CD8-positive, alpha-beta memory T cell (primary cell): ENCODE measurements at regions of chr17 and their contacts with region 1.

Region 1: DNA sequence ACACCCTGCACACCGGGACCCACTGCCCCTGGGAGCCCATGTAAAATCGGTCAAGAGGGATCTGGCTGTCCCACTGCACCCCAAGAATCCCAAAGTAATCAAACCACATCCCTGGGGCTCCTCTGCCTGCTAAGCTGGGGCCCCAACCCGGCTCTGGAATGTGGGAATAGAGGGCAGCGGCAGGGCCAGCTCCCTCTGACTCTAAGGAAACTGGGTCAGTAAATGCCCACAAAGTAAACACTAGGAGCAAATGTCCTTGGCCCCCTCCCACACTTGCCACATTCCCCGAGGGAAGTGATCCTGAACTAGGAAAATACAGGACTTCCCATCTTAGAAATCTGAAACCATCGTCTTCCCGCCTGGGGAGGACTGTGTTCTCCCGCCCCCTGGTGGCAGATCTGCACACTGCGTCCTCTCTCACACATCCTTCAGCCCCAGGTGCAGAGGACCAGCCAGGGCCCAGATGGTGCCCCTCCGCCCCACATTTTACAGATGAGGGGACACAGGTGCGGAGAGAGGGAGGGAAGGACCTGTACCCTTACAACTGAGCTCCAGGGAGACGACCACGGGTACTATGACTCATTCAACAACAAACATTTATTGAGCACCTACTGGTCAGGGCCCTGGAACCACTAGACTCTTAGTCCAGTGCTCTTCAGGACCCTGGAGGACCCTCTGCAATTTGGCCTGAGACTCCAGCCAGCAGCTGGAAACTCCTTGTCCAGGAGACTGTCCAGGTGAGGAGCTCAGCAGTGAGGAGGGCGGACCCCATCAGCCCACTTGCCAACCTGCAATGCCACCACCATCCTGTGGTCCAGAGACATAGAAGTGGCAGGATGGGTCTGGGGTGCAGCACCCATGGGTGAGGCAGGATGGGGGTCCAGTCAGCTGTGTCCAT is 10.1 kb downstream of the P3H4 start:
- DNase-seq: peak; percentile 52 to 76 (median 61)
- H3K4me3 ChIP-seq: no peak overlapping the region
- H3K4me3 Mint-ChIP-seq: no peak overlapping the region
- H3K27ac ChIP-seq: no peak overlapping the region
- H3K27ac Mint-ChIP-seq: peak overlapping the region in 5 of 8 donors; percentile 25 to 42 (median 35)
- H3K4me1 ChIP-seq: no peaks in the 10 kb centered on the region
- H3K4me1 Mint-ChIP-seq: peaks cover 4 to 6% (median 5%) of the 10 kb centered on the region in 3 donors
- H3K27me3 ChIP-seq: no peaks in the 10 kb centered on the region
- H3K27me3 Mint-ChIP-seq: peaks cover 6 to 8% of the 10 kb centered on the region in 2 donors

Region 2: GRCh38 chr17:41688699-41689496 is 112.7 kb before region 1 on chr17 and contains the start of gene EIF1:
- CTCF ChIA-PET with region 1: no interaction called
- POLR2A ChIA-PET with region 1: no interaction called
- DNase-seq: peak; percentile 99 to 100 (median 99)
- H3K4me3 ChIP-seq: peak within 1 kb of the TSS; percentile 94
- H3K4me3 Mint-ChIP-seq: peak within 1 kb of the TSS; percentile 96 to 100 (median 98)
- H3K27ac ChIP-seq: peak within 1 kb of the TSS; percentile 100
- H3K27ac Mint-ChIP-seq: peak within 1 kb of the TSS; percentile 99 to 100 (median 99)
- H3K4me1 ChIP-seq: peaks cover 31% of the 10 kb centered on the region
- H3K4me1 Mint-ChIP-seq: peaks cover 34 to 47% (median 39%) of the 10 kb centered on the region in 3 donors
- H3K27me3 ChIP-seq: no peaks in the 10 kb centered on the region
- H3K27me3 Mint-ChIP-seq: peaks cover 0 to 15% of the 10 kb centered on the region in 2 donors
- total RNA-seq, gene EIF1: 1,446 to 1,504 TPM

Region 3: GRCh38 chr17:41738077-41738735 is 63.4 kb before region 1 on chr17:
- CTCF ChIA-PET with region 1: interaction called, 12 read pairs
- POLR2A ChIA-PET with region 1: no interaction called
- DNase-seq: peak; percentile 64 to 81 (median 68)
- H3K4me3 ChIP-seq: no peak overlapping the region
- H3K4me3 Mint-ChIP-seq: no peak overlapping the region
- H3K27ac ChIP-seq: no peak overlapping the region
- H3K27ac Mint-ChIP-seq: no peak overlapping the region
- H3K4me1 ChIP-seq: no peaks in the 10 kb centered on the region
- H3K4me1 Mint-ChIP-seq: peaks cover 0 to 14% (median 2%) of the 10 kb centered on the region in 3 donors
- H3K27me3 ChIP-seq: peaks cover 16% of the 10 kb centered on the region
- H3K27me3 Mint-ChIP-seq: peaks cover 25 to 35% of the 10 kb centered on the region in 2 donors

Region 4: DNA sequence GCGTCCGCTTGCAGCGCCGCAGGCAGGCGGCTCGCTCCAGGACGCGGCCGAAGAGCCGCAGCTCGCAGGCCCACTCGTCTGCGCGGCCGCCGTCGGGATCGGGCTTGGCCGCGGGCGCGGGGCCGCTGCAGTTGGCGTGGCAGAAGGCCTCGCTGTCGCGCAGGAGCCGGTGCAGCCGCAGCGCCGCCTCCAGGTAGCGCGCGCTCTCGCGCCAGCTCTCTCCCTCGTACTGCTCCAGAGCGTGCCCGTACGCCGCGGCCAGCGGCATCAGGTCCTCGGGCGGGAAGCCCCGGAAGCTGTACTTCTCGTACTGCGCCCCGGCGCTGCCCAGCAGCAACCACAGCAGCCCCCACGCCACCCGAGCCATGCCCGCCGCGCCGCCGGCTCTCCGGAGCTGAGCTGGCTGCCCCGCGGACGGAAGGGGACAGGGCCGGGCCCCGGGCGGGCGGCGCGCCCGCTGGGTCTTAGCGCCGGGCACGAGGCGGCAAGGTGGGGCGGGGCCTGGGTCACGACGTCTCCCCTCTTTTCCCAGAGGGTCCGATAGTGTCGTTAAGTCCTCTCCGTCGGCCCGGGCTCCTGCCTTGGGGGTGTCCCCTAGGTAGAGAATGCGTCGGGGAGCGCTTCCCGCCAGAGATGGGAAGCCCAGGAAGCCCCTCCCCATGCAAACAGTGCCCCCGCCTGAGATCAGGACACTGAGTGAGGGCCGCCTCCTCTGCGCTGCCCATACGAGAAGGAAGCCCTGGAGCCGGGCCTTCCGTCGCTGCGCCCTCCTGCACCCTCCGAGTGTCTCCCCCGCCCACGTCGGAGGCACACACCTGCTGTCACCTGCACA is 10.1 kb after region 1 on chr17 and contains the start of gene P3H4:
- CTCF ChIA-PET with region 1: interaction called, 15 read pairs
- POLR2A ChIA-PET with region 1: interaction called, 3 read pairs
- DNase-seq: peak; percentile 58 to 82 (median 78)
- H3K4me3 ChIP-seq: peak within 1 kb of the TSS; percentile 65
- H3K4me3 Mint-ChIP-seq: peak within 1 kb of the TSS; percentile 93 to 96 (median 94)
- H3K27ac ChIP-seq: peak within 1 kb of the TSS; percentile 24
- H3K27ac Mint-ChIP-seq: peak within 1 kb of the TSS; percentile 31 to 88 (median 84)
- H3K4me1 ChIP-seq: peaks cover 28% of the 10 kb centered on the region
- H3K4me1 Mint-ChIP-seq: peaks cover 25 to 34% (median 25%) of the 10 kb centered on the region in 3 donors
- H3K27me3 ChIP-seq: no peaks in the 10 kb centered on the region
- H3K27me3 Mint-ChIP-seq: peaks cover 0 to 8% of the 10 kb centered on the region in 2 donors
- total RNA-seq, gene P3H4: 2.6 to 3.7 TPM

Region 5: DNA sequence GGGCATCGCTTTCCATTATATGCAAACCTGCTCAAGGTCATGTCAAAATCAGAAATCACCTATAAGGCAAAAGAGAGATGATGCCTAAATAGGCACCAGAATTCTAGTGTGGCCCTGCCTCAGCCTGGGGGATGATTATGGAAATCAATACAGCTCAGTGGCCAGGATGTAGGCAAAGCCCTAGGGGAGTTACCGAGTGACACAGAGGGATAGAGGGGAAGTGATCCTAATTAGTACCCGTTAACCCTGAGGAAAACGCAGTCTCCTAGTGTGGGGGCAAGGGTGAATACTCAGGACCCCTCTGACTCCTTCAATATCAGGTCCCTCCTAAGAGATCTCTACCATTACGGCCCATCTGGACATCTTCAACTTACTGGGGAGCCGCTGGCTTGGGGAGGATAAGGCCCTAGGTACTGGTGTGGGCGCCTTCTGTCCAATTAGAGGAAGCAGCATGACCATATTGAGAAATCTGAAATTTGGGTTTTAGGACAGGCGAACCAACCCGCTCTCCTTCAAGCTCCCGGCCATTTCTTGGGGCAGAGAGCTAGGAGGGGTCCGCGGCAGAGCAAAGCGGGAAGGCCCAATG is 33.7 kb after region 1 on chr17:
- CTCF ChIA-PET with region 1: no interaction called
- POLR2A ChIA-PET with region 1: no interaction called
- DNase-seq: no peak
- H3K4me3 ChIP-seq: peak overlapping the region; percentile 52
- H3K4me3 Mint-ChIP-seq: peak overlapping the region; percentile 85 to 92 (median 87)
- H3K27ac ChIP-seq: no peak overlapping the region
- H3K27ac Mint-ChIP-seq: peak overlapping the region in 7 of 8 donors; percentile 21 to 86 (median 64)
- H3K4me1 ChIP-seq: peaks cover 17% of the 10 kb centered on the region
- H3K4me1 Mint-ChIP-seq: peaks cover 11 to 23% (median 13%) of the 10 kb centered on the region in 3 donors
- H3K27me3 ChIP-seq: no peaks in the 10 kb centered on the region
- H3K27me3 Mint-ChIP-seq: peaks cover 0 to 3% of the 10 kb centered on the region in 2 donors